Activated CD8-positive, alpha-beta memory T cell treated with anti-CD3 and anti-CD28 coated beads, Interleukin-2, amount 10 ng/mL, durations not matched to agents 7 days and 5 days (primary cell): ENCODE measurements at regions of chr16 and their contacts with region 1.

Region 1: DNA sequence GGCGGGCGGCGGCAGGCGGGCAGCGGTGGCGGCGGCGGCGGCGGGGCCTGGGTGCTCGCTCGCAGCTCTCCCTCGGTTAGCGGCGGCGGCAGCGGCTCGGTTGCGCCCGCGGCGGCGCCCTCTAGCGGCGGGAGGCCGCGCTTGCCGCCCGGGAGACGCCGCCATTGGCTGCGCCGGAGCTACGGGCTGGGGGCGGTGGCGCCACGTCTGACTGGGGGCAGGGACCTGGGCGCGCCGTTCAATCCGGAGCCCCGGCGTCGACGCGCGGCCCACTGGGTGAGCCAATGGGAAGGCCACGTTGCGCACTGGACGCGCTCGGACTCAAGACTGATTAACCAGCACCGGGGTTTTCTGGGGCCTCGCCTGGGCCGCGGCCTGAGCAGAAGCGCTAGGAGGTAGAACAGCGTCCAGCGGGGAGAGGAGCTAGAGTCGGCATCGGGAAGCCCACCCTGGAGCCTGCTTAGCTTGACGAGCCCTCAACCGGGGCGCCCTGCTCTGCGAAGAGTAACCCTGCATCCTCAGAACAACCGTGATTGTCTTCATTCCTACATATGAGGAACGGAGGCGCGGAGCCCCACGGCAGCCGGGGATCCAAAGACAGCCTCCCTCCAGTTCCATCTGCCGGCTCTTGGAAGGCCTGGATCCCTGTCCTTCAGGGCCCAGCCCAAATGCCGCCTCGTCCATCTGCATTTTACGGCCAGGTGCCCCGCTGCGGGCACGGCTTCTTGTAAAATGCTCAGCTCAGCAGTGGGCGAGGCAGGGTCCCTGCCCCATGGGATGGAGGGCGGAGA is at the start of gene ZC3H7A:
- DNase-seq: peak; percentile 96
- ATAC-seq: peak; percentile 99
- H3K4me3 Mint-ChIP-seq: peak within 1 kb of the TSS; percentile 92
- H3K27ac Mint-ChIP-seq: peak within 1 kb of the TSS; percentile 97
- H3K4me1 Mint-ChIP-seq: peaks cover 63% of the 10 kb centered on the region
- H3K27me3 Mint-ChIP-seq: no peaks in the 10 kb centered on the region
- total RNA-seq, gene ZC3H7A: 70.7 to 85.9 TPM

Region 2: DNA sequence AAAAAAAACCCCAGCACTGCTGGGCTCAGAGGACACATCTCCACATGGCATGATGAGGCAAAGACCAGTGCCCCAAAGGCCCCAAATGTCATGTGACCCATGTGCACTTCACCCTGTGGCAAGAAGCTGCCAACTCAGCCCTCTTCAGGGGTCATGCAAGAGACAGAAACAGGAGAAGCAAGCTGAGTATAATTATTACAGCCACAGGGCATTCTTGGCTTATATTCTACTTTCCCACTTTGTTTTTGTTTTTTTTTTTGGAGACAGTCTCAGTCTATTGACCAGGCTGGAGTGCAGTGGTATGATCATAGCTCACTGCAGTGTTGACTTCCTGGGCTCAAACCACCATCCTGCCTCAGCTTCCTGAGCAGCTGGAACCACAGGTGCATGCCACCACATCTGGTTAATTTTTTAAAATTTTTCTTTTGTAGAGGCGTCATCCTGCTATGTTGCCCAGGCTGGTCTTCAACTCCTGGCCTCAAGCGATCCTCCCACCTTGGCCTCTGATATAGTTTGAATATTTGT is 178.0 kb before region 1 on chr16:
- CTCF ChIA-PET with region 1: no interaction called
- DNase-seq: peak; percentile 85
- ATAC-seq: peak; percentile 66
- H3K4me3 Mint-ChIP-seq: peak overlapping the region; percentile 39
- H3K27ac Mint-ChIP-seq: peak overlapping the region; percentile 91
- H3K4me1 Mint-ChIP-seq: peaks cover 51% of the 10 kb centered on the region
- H3K27me3 Mint-ChIP-seq: no peaks in the 10 kb centered on the region

Region 3: DNA sequence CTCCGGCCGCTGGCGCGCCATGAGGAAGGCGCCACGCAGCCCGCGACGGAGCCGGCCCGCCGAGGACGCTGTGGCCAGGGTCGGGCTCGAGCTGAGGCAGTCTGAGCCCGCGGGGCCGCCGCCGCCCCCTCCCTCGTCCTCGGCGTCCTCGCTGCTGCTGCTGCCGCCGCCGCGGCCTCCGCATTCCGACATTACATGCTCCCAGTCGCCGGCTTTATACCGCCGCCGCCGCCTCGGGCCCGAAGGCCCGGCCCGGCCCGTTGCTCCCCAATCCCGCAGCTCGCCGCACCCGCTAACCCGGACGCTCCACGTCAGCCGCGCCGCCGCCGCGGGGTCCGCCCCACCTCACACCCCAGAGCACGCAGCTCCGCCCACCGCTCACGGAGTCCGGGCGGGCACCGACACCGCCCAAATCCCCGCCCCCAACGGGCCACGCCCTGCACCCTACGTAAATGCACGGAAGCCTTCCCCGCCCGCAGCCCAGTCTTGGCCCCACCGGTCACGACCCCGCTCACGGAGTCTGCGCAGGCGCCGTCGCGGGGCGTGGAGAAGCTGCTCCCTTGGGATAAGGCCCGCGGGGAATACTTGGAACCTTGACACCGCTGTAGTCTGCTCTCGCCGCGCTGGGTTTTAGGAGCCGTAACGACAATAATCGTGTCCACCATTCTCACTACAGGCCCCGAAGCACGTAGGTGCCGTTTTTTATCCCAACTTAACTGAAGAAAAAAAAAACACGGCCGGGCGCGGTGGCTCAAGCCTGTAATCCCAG is 54.6 kb before region 1 on chr16 and contains the start of gene TXNDC11:
- CTCF ChIA-PET with region 1: interaction called, 27 read pairs
- DNase-seq: peak; percentile 99
- ATAC-seq: peak; percentile 93
- H3K4me3 Mint-ChIP-seq: peak within 1 kb of the TSS; percentile 96
- H3K27ac Mint-ChIP-seq: peak within 1 kb of the TSS; percentile 97
- H3K4me1 Mint-ChIP-seq: peaks cover 51% of the 10 kb centered on the region
- H3K27me3 Mint-ChIP-seq: no peaks in the 10 kb centered on the region
- total RNA-seq, gene TXNDC11: 41.3 to 47.2 TPM

Region 4: GRCh38 chr16:11783319-11784037 is 13.9 kb before region 1 on chr16:
- CTCF ChIA-PET with region 1: interaction called, 58 read pairs
- DNase-seq: peak; percentile 62
- ATAC-seq: peak; percentile 79
- H3K4me3 Mint-ChIP-seq: peak overlapping the region; percentile 69
- H3K27ac Mint-ChIP-seq: peak overlapping the region; percentile 90
- H3K4me1 Mint-ChIP-seq: peaks cover 63% of the 10 kb centered on the region
- H3K27me3 Mint-ChIP-seq: no peaks in the 10 kb centered on the region

Region 5: DNA sequence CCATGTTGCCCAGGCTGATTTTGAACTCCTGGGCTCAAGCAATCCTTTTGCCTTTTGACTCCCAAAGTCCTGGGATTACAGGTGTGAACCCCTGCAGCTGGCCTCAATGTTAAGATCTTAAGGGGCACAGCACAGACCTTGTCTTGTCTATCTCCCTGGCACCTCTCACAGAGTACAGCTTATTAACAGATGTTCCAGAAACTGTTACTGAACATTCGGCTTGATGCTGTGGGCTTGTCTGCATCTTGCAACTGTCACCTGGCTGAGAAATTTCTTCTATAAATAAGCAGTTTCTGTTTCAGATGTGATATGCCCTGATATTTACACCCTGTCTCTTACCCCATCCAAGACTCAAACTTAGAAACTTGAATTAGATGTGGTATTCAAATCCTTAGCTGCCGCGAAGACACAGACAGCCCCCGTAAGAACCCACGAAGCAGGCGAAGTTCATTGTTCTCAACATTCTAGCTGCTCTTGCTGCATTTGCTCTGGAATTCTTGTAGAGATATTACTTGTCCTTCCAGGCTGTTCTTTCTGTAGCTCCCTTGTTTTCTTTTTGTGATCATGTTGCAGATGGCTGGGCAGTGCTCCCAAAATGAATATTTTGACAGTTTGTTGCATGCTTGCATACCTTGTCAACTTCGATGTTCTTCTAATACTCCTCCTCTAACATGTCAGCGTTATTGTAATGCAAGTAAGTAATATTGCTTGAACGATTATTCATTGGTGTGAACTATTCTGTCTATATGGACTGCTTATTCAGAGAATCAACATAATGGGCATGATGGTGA is 167.6 kb after region 1 on chr16 and contains the start of gene TNFRSF17:
- CTCF ChIA-PET with region 1: no interaction called
- DNase-seq: no peak
- ATAC-seq: no peak
- H3K4me3 Mint-ChIP-seq: no peak within 1 kb of the TSS
- H3K27ac Mint-ChIP-seq: no peak within 1 kb of the TSS
- H3K4me1 Mint-ChIP-seq: peaks cover 7% of the 10 kb centered on the region
- H3K27me3 Mint-ChIP-seq: peaks cover 13% of the 10 kb centered on the region
- total RNA-seq, gene TNFRSF17: not detected